ENCODE measurements at regions of chr5 and their contacts with region 1.

Region 1: GRCh38 chr5:32232441-32233219 is 58.5 kb upstream of the GOLPH3 start:
- DNase-seq: peak; percentile 75 to 85
- H3K4me3 ChIP-seq: no peak overlapping the region
- H3K27ac ChIP-seq: peak overlapping the region; percentile 41 to 58
- H3K4me1 ChIP-seq: peaks cover 0 to 30% (median 24%) of the 10 kb centered on the region in 4 donors
- H3K27me3 ChIP-seq: no peaks in the 10 kb centered on the region
- CTCF ChIP-seq: peak; percentile 76 to 77

Region 2: GRCh38 chr5:31954091-31954490 is 278.5 kb before region 1 on chr5:
- intact Hi-C with region 1: no loop called
- DNase-seq: no peak
- H3K4me3 ChIP-seq: no peak overlapping the region
- H3K27ac ChIP-seq: no peak overlapping the region
- H3K4me1 ChIP-seq: peaks cover 0 to 15% (median 0%) of the 10 kb centered on the region in 4 donors
- H3K27me3 ChIP-seq: no peaks in the 10 kb centered on the region
- CTCF ChIP-seq: no peak

Region 3: GRCh38 chr5:32312647-32313523 is 80.3 kb after region 1 on chr5 and contains the start of gene MTMR12:
- intact Hi-C with region 1: loop called (anchors 10 kb)
- DNase-seq: peak; percentile 100
- H3K4me3 ChIP-seq: peak within 1 kb of the TSS; percentile 69 to 100
- H3K27ac ChIP-seq: peak within 1 kb of the TSS; percentile 88 to 99
- H3K4me1 ChIP-seq: peaks cover 0 to 37% (median 24%) of the 10 kb centered on the region in 4 donors
- H3K27me3 ChIP-seq: no peaks in the 10 kb centered on the region
- CTCF ChIP-seq: no peak

Measured in tibial artery (tissue), 4 donors.